IMR-90 (cell line): ENCODE measurements at regions of chr5 and their contacts with region 1.

Region 1: GRCh38 chr5:133944263-133945185 is 23.9 kb downstream of the C5orf15 start:
- DNase-seq: peak; percentile 44
- ATAC-seq: peak; percentile 56
- H3K4me3 ChIP-seq: no peak overlapping the region
- H3K27ac ChIP-seq: no peak overlapping the region
- H3K4me1 ChIP-seq: 0 out of 2 replicates have a peak, but pooled peaks cover 2% of the 10 kb centered on the region
- H3K27me3 ChIP-seq: peaks cover 12% of the 10 kb centered on the region
- CTCF ChIP-seq: peak; percentile 67
- POLR2A ChIP-seq: no peak
- RAD21 ChIP-seq: peak; percentile 80

Region 2: GRCh38 chr5:133423618-133424282 is 520.8 kb before region 1 on chr5:
- CTCF ChIA-PET with region 1: interaction called, 3 read pairs
- POLR2A ChIA-PET with region 1: no interaction called
- dilution Hi-C with region 1: no loop called
- in situ Hi-C with region 1: loop called (anchors 10 kb)
- intact Hi-C with region 1: loop called (anchors 5 kb)
- DNase-seq: peak; percentile 12
- ATAC-seq: peak; percentile 91
- H3K4me3 ChIP-seq: no peak overlapping the region
- H3K27ac ChIP-seq: no peak overlapping the region
- H3K4me1 ChIP-seq: no peaks in the 10 kb centered on the region
- H3K27me3 ChIP-seq: peaks cover 8% of the 10 kb centered on the region
- CTCF ChIP-seq: peak; percentile 65
- POLR2A ChIP-seq: no peak
- RAD21 ChIP-seq: peak; percentile 47; the same call in 1 of the 2 replicates

Region 3: GRCh38 chr5:133552931-133553525 is 391.5 kb before region 1 on chr5:
- CTCF ChIA-PET with region 1: no interaction called
- POLR2A ChIA-PET with region 1: no interaction called
- dilution Hi-C with region 1: no loop called
- in situ Hi-C with region 1: no loop called
- intact Hi-C with region 1: loop called (anchors 1 kb)
- DNase-seq: peak; percentile 26
- ATAC-seq: peak; percentile 86
- H3K4me3 ChIP-seq: no peak overlapping the region
- H3K27ac ChIP-seq: no peak overlapping the region
- H3K4me1 ChIP-seq: no peaks in the 10 kb centered on the region
- H3K27me3 ChIP-seq: 0 out of 2 replicates have a peak, but pooled peaks cover 2% of the 10 kb centered on the region
- CTCF ChIP-seq: peak; percentile 56
- POLR2A ChIP-seq: no peak
- RAD21 ChIP-seq: peak; percentile 45

Region 4: GRCh38 chr5:133688391-133688790 is 256.1 kb before region 1 on chr5:
- CTCF ChIA-PET with region 1: no interaction called
- POLR2A ChIA-PET with region 1: no interaction called
- dilution Hi-C with region 1: no loop called
- in situ Hi-C with region 1: no loop called
- intact Hi-C with region 1: no loop called
- DNase-seq: no peak
- ATAC-seq: no peak
- H3K4me3 ChIP-seq: no peak overlapping the region
- H3K27ac ChIP-seq: no peak overlapping the region
- H3K4me1 ChIP-seq: no peaks in the 10 kb centered on the region
- H3K27me3 ChIP-seq: peaks cover 2% of the 10 kb centered on the region; the same call in 1 of the 2 replicates
- CTCF ChIP-seq: no peak
- POLR2A ChIP-seq: no peak
- RAD21 ChIP-seq: no peak

Region 5: DNA sequence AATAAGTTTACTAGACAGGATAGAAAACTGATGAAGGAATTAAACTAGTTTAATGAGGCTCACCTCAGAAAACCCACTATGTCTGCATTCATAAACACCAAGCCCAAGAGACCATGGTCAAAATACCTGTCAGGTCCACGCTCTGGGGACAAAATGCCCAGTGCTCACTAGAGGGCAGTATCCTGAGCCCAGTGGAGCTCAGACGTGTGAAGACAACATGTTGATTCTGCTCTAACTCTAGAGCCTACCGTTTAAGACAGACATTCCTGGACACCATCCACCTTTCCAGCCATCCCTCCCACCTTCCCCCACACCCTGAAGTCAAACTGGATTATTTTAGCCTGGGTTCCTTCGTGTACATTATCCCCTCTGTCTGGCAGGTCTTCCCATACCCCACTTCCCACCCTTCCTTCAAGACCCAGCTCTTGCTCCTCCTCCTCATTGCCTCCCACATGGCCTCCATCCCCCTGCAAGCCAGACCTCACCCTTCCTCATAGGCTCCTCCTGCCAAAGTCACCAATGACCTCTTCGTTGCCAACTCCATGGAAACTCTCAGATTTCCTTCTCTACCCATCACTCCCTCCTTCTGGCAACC is 189.9 kb before region 1 on chr5:
- CTCF ChIA-PET with region 1: no interaction called
- POLR2A ChIA-PET with region 1: no interaction called
- dilution Hi-C with region 1: no loop called
- in situ Hi-C with region 1: no loop called
- intact Hi-C with region 1: loop called (anchors 10 kb)
- DNase-seq: peak; percentile 7
- ATAC-seq: no peak; the same call in 1 of the 2 replicates
- H3K4me3 ChIP-seq: no peak overlapping the region
- H3K27ac ChIP-seq: no peak overlapping the region
- H3K4me1 ChIP-seq: no peaks in the 10 kb centered on the region
- H3K27me3 ChIP-seq: peaks cover 5% of the 10 kb centered on the region
- CTCF ChIP-seq: peak; percentile 42
- POLR2A ChIP-seq: no peak
- RAD21 ChIP-seq: peak; percentile 32; the same call in 1 of the 2 replicates